WTC11 (cell line): ENCODE measurements at regions of chr3 and their contacts with region 1.

Region 1: GRCh38 chr3:112043603-112044201 is 9.2 kb downstream of the TMPRSS7 start:
- DNase-seq: peak; percentile 34
- ATAC-seq: peak; percentile 86
- H3K4me3 Mint-ChIP-seq: no peak overlapping the region
- H3K27ac Mint-ChIP-seq: no peak overlapping the region
- H3K4me1 Mint-ChIP-seq: peaks cover 31% of the 10 kb centered on the region
- H3K27me3 Mint-ChIP-seq: no peaks in the 10 kb centered on the region
- CTCF ChIP-seq: peak; percentile 89

Region 2: GRCh38 chr3:111989061-111989678 is 54.5 kb before region 1 on chr3:
- CTCF ChIA-PET with region 1: interaction called, 22 read pairs
- POLR2A ChIA-PET with region 1: no interaction called
- DNase-seq: no peak
- ATAC-seq: peak; percentile 80
- H3K4me3 Mint-ChIP-seq: no peak overlapping the region
- H3K27ac Mint-ChIP-seq: no peak overlapping the region
- H3K4me1 Mint-ChIP-seq: peaks cover 4% of the 10 kb centered on the region
- H3K27me3 Mint-ChIP-seq: no peaks in the 10 kb centered on the region
- CTCF ChIP-seq: no peak

Region 3: DNA sequence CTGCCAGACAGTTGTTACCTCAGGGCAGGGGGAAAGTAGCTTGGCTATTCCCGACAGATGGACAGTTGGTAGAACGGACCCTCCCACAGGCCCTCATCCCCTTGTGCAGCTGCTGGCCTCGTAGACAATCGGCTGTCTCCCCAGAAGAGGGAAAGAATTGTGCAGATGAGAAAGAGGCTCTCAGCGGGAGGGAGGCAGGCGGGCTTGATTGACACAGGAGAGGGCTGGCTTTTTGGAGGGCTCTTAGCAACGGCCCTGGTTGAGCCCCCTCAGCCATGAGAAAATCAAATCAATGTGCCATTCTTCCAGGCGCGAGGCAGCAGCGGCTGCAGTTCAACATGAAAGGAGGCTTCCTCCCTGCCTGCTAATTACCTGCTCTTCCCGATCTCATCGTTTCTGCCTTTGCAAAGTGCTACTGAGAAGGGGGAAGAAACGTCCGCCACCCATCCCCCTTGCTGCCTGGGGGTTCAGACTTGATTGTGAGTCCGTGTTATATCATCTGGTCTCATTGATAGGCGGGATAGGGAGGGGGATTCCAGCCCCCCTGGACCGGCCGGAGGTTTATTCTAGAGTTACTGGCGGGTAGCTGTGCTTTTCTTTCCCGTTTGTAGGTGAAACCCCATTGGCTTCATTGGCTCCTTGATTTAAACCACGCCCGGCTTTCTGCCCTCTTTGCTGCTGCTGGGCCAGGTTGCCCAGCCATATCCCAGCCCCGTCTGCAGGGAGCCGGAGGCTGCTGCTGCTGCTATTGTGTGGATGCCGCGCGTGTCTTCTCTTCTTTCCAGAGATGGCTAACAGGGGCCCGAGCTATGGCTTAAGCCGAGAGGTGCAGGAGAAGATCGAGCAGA is 44.8 kb before region 1 on chr3 and contains the start of gene TAGLN3:
- CTCF ChIA-PET with region 1: interaction called, 14 read pairs
- POLR2A ChIA-PET with region 1: no interaction called
- DNase-seq: peak; percentile 54
- ATAC-seq: peak; percentile 86
- H3K4me3 Mint-ChIP-seq: peak within 1 kb of the TSS; percentile 90
- H3K27ac Mint-ChIP-seq: no peak within 1 kb of the TSS
- H3K4me1 Mint-ChIP-seq: peaks cover 22% of the 10 kb centered on the region
- H3K27me3 Mint-ChIP-seq: peaks cover 64% of the 10 kb centered on the region
- CTCF ChIP-seq: no peak
- total RNA-seq, gene TAGLN3: 2.8 to 3.3 TPM (median 2.8 TPM) in 3 replicates